ENCODE measurements at regions of chr1 and their contacts with region 1.

Region 1: DNA sequence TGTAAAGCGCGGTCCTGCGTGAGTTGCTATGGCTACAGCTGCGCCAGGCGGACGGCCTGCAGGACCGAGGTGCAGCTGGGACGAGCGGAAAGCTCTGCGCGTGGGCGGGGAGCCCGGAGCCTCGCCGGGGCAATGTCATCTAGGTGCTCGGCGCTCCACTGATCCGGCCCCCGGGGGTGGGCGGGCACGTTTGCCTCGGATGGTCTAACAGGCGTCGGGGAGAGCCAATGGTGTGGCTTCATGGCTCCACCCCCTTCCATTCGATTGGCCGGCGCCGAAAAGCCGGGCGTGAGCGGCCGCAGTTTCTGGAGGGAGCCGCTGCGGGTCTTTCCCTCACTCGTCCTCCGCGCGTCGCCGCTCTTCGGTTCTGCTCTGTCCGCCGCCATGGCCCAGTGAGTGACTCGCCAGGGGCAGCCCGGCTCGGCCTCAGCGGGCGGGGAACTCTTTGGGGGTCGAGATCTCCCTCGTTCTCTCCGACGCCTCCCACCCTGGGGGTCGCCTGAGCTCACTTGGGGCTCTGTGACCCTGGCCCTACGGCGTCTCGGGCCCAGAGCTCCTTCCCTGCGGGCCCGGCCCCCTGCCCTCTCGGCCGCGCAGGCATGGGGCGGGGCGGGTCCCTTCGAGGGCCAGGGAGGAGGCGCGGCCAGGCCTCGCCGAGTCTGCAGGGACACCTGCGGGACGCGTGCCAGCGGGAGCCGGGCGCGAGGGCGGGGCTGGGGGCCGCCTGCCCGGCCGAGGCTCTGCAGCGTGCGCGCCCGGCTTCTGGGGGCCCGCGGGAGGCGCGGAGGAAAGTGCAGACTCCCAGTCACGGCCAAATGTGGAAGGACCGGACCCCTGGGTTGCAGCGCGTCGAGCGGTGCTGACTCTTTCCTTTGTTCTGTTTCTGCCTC is at the start of gene PGD:
- DNase-seq: peak; percentile 98
- H3K4me3 Mint-ChIP-seq: peak within 1 kb of the TSS; percentile 92
- H3K27ac Mint-ChIP-seq: peak within 1 kb of the TSS; percentile 80
- H3K4me1 Mint-ChIP-seq: peaks cover 28% of the 10 kb centered on the region
- H3K27me3 Mint-ChIP-seq: no peaks in the 10 kb centered on the region
- total RNA-seq, gene PGD: 150 and 152 TPM in 2 replicates

Region 2: GRCh38 chr1:10032590-10033358 is 366.2 kb before region 1 on chr1 and contains the start of gene UBE4B:
- intact Hi-C with region 1: loop called (anchors 1 kb)
- DNase-seq: peak; percentile 99
- H3K4me3 Mint-ChIP-seq: peak within 1 kb of the TSS; percentile 96
- H3K27ac Mint-ChIP-seq: peak within 1 kb of the TSS; percentile 93
- H3K4me1 Mint-ChIP-seq: peaks cover 16% of the 10 kb centered on the region
- H3K27me3 Mint-ChIP-seq: no peaks in the 10 kb centered on the region
- total RNA-seq, gene UBE4B: 37.2 and 37.7 TPM in 2 replicates

Region 3: DNA sequence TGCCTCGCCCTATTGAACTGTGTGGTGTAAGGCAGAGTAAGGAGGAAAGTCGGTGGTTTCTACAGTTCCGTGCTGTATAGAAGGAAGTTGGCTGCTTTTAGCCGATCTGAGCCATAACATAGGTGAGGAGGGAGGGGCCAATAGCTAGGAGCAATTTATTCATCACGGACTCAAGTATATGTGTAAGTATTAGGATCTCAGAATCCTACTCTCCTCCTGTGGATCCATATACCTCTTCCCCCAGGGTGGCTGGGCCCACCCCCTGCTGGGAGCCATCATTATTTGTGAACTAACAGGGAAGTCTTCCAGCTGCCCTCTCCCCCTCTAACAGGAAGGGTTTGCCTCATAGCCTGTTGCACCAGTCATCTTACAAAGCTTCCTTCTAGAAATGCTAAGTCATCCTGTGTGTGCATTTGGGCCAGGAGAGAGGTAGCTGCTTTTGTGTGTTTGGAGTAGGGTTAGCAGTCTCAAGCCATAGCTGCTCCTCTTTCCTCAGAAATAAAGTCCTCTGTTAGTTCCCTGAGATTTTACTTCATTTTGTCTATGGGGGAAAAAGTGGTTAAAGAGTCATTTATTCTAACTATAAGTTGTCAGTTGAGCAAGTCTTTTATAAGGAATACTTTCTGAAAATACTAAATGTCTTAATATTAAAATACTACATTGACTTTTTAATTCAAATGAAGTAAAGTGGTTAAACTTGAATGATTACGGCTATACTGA is 16.4 kb after region 1 on chr1:
- intact Hi-C with region 1: no loop called
- DNase-seq: no peak
- H3K4me3 Mint-ChIP-seq: no peak overlapping the region
- H3K27ac Mint-ChIP-seq: peak overlapping the region; percentile 77
- H3K4me1 Mint-ChIP-seq: peaks cover 10% of the 10 kb centered on the region
- H3K27me3 Mint-ChIP-seq: no peaks in the 10 kb centered on the region

Region 4: GRCh38 chr1:10472220-10473144 is 73.5 kb after region 1 on chr1 and contains the start of gene DFFA:
- intact Hi-C with region 1: loop called (anchors 2 kb)
- DNase-seq: peak; percentile 90
- H3K4me3 Mint-ChIP-seq: peak within 1 kb of the TSS; percentile 95
- H3K27ac Mint-ChIP-seq: peak within 1 kb of the TSS; percentile 93
- H3K4me1 Mint-ChIP-seq: peaks cover 33% of the 10 kb centered on the region
- H3K27me3 Mint-ChIP-seq: no peaks in the 10 kb centered on the region
- total RNA-seq, gene DFFA: 52.9 and 53.8 TPM in 2 replicates

Region 5: DNA sequence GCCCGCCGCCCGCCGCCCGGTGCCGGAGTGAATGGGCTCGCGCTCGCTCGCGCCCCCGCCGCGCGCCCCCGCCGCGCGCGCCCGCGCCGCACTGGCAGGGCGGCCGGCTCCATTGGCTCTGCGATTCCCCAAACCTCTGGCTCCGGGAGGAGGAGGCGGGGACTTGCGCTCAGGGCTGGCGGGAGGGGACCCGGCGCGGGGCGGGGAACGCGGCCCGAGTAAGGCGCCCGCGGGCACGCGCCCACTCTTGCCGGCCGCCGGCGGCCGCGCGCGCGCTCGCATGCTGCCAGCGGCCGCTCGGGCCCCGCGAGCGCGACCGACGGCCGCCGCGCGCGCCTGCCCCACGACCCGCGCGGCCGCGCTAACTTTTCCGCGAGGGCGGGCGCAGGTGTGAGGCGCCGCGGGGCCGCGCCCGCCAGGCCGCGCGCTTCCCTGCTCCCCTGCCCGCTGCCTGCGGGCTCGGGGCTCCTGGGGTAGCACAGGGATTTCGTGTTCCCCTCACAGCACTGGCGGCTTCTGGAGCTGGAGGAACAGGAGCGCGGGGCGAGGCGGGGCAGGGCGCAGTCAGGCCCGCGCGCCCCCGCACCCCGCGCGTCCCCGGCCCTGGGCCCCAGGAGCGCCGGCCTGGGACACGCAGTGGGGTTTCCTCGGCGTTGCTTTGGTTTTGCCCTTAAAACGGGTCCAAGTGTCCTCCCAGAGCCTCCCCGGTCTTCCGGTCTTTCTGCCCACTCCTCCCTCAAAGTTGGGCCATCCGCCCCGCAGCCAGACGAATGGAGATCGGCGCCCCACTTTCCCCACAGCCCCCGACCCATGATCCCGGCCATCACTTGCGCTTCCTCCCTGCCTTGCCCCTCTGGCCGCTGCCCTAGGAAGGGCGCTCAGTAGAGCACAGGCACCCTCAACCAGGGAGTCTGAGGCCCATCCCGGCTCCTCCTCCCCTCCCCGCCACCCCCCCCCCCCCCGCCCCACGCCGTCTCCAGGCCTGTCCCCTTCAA is 296.0 kb after region 1 on chr1:
- intact Hi-C with region 1: no loop called
- DNase-seq: peak; percentile 76
- H3K4me3 Mint-ChIP-seq: peak overlapping the region; percentile 71
- H3K27ac Mint-ChIP-seq: no peak overlapping the region
- H3K4me1 Mint-ChIP-seq: peaks cover 31% of the 10 kb centered on the region
- H3K27me3 Mint-ChIP-seq: peaks cover 15% of the 10 kb centered on the region

Measured in activated T-helper 2 cell treated with anti-CD3 and anti-CD28 coated beads, Interferon-gamma antibody, Interleukin-2, Interleukin-4, amounts not matched to agents 10 μg/mL and 5 μg/mL and 100 μg/mL, durations not matched to agents 14 hours and 24 hours and 36 hours (primary cell).